ENCODE measurements at regions of chr10 and their contacts with region 1.

Region 1: GRCh38 chr10:43105102-43105785 is 28.4 kb downstream of the RET start:
- DNase-seq: peak; percentile 31 to 63
- H3K4me3 ChIP-seq: peak overlapping the region; percentile 44 to 82 (median 60)
- H3K27ac ChIP-seq: no peak overlapping the region
- H3K4me1 ChIP-seq: no peaks in the 10 kb centered on the region
- H3K27me3 ChIP-seq: no peaks in the 10 kb centered on the region
- CTCF ChIP-seq: peak; percentile 82 to 98 (median 98)
- POLR2A ChIP-seq: no peak

Region 2: DNA sequence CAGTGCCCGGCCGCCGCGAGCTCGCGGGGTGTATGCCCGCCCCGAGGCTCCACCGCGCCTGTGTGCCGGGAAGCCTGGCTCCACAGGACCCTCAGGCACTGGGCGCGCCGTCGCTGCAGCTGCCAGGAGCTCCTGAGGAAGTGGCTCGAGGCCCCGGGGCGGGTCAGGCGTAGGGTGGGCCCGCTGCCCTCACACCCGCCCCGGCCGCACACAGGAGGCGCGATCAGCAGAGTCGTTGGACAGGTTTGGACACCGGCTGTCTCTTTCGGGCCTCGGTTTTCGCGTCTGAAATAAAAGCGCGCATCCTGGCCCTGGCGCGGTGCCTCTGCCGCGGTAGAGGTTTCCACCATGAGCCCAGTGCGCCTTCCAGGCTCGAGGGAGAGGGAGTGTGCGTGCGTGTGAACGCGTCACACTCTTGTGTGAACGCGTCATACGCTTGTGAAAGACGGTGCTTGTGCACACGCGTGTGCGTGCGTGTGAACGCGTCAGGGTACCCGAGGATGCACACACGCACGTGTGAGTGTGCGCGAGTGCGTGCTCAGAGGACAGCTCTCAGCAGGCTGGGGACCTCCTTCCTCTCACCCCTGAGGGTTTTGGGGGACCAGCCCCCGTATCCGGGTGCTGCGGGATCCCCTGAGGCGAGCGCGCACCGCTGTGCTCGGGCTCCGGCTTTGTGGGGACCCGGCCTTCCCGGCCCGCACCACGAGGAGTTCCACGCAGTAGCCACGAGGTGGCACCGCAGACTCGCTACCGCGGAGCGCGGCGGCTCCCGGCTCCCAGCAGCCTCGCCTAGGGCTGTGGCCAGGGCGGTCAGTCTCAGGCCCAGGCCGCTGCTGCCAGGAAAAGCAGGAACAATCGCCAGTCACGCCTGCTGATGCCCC is 238.9 kb before region 1 on chr10:
- intact Hi-C with region 1: loop called (anchors 10 kb)
- DNase-seq: peak in 1 of 2 donors; percentile 25
- H3K4me3 ChIP-seq: peak overlapping the region in 2 of 3 donors; percentile 26 to 59
- H3K27ac ChIP-seq: no peak overlapping the region
- H3K4me1 ChIP-seq: no peaks in the 10 kb centered on the region
- H3K27me3 ChIP-seq: peaks cover 0 to 12% of the 10 kb centered on the region in 2 donors
- CTCF ChIP-seq: peak in 2 of 3 donors; percentile 39 to 51
- POLR2A ChIP-seq: no peak

Region 3: DNA sequence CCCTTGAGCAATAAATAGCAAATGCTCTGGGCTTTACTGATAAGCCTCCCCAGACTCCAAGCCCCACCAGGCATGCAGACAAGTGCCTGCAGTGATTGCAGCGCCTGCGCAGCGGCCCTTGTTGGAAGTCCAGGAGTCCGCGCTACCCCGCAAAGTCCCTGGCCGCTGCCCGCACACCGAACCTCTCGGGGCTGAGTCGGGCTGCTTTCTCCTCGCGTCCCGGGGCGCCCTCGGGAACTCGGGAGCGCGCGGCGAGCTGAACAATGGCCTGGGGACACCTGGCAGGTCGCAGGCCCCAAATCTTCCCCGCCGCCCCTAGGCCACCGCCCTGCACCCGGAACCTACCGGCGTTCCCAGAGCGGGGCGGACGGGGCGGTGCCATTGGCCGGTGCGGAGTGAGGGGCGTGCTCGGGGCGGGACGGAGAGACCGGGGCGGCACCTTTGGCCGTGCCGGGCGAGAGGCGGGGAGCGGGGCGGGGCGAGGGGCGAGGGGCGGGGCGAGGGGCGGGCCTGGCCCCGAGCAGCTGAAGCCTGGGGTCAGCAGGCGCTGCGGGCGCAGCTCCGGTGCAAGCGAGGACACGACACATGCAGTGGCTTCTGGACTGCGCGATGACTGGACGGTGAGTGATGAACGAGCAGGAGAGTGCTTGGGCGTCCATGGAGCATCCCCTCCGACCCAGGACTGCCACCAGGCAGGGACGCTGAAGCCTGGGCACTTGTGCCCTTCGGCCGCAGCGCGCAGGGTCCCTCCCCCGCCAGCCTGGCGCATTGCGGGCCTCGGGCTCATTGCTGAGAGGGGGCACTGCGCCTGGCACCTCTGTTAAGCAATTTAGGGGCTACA is 1854.2 kb after region 1 on chr10 and contains the start of gene RASSF4:
- intact Hi-C with region 1: no loop called
- DNase-seq: peak; percentile 81 to 92
- H3K4me3 ChIP-seq: peak within 1 kb of the TSS; percentile 62 to 85 (median 68)
- H3K27ac ChIP-seq: peak within 1 kb of the TSS; percentile 74 to 87
- H3K4me1 ChIP-seq: peaks cover 4 to 11% of the 10 kb centered on the region in 2 donors
- H3K27me3 ChIP-seq: no peaks in the 10 kb centered on the region
- CTCF ChIP-seq: no peak
- POLR2A ChIP-seq: peak; percentile 74
- total RNA-seq, gene RASSF4: 18.7 to 364 (median 41.1) TPM

Measured in breast epithelium (tissue), 4 donors.